Activated naive CD4-positive, alpha-beta T cell treated with anti-CD3 and anti-CD28 coated beads, Interleukin-2, amount 10 ng/mL, durations not matched to agents 7 days and 5 days (primary cell): ENCODE measurements at regions of chr3 and their contacts with region 1.

Region 1: DNA sequence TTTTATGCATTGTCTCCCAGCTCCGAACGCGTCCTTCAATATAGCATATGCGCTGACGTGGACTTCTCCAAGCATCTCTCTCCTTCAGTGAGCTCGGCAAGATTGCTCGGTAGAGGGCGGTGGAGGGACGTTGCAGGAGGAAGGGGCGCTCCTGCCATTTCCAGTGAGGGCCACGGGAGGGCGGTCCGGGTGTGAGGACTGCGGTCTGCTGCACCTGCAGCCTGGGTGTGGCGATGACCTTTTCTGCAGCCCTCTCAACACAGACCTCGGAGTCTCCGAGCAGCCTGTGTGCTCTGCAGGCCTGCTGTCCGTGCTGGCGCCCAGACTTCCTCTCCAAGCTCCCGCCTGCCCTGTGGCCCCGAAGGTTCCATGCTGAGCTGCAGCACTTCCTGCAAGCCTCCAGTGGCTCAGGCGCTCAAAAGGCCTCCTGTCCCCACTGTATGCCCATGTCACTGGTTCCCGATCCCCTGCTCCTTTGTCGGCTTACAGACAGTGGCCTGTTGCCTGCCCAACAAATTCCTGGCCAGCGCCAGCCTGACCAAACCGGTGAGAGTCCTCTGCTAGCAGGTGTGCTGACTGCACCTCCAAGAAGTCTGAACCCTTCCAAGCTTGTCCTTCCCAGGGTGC is 8.9 kb upstream of the RTP3 start:
- DNase-seq: peak; percentile 97
- H3K4me3 Mint-ChIP-seq: peak overlapping the region; percentile 24
- H3K27ac Mint-ChIP-seq: no peak overlapping the region
- H3K4me1 Mint-ChIP-seq: peaks cover 37% of the 10 kb centered on the region
- H3K27me3 Mint-ChIP-seq: peaks cover 9% of the 10 kb centered on the region

Region 2: DNA sequence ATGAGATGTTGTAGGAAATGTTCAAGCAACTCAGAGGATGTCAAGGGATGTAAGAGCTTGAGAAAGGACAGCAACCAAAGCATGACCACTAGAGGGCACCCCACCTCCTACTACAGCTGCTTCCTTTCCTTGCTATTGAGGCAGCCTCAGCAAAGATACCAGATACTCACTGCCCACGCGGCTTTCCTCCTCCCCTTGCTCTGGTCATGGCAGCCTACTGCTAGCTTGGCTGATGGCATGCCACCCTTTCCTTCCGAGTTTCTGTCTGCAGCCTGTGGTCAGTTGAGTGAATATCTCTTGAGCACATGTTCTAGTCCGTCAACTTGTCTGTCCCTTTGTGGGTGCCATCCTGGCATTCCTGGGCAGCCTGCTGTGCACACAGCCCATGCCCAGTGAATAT is 550.0 kb before region 1 on chr3:
- CTCF ChIA-PET with region 1: no interaction called
- DNase-seq: peak; percentile 92
- H3K4me3 Mint-ChIP-seq: no peak overlapping the region
- H3K27ac Mint-ChIP-seq: no peak overlapping the region
- H3K4me1 Mint-ChIP-seq: peaks cover 38% of the 10 kb centered on the region
- H3K27me3 Mint-ChIP-seq: peaks cover 7% of the 10 kb centered on the region

Region 3: GRCh38 chr3:46325645-46326585 is 162.9 kb before region 1 on chr3:
- CTCF ChIA-PET with region 1: no interaction called
- DNase-seq: no peak
- H3K4me3 Mint-ChIP-seq: no peak overlapping the region
- H3K27ac Mint-ChIP-seq: no peak overlapping the region
- H3K4me1 Mint-ChIP-seq: peaks cover 3% of the 10 kb centered on the region
- H3K27me3 Mint-ChIP-seq: peaks cover 29% of the 10 kb centered on the region

Region 4: GRCh38 chr3:46469680-46470357 is 19.0 kb before region 1 on chr3:
- CTCF ChIA-PET with region 1: interaction called, 21 read pairs
- DNase-seq: no peak
- H3K4me3 Mint-ChIP-seq: no peak overlapping the region
- H3K27ac Mint-ChIP-seq: no peak overlapping the region
- H3K4me1 Mint-ChIP-seq: peaks cover 2% of the 10 kb centered on the region
- H3K27me3 Mint-ChIP-seq: peaks cover 87% of the 10 kb centered on the region

Region 5: DNA sequence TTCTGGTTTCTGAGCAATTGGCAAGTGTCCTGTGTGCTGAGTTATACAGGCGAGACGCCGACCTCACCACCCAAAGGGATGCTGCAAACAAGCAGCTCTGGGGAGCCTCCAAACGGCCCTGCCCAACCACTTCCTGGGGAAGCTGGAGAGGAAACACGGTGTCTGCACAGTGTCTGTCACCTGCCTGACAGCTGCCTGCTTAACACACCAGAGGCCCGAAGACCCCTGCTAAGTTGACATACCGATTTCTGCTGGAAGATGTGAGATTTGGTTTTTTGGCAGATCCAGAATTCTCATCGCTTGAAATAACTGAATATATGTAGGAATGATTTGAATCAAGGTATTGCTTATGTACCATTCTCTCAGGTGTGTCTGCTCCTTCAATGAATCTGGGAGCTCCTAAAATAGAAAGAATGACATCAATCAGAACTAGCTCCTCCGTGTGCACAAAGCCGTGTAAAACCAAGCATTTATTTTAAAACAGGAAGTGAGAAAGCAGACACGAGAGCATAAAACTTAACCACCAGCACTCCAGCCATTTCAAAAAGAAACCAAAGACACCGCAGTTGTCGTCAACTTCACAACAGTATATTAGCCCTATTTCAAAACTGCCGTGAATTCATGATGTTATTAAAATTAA is 50.1 kb after region 1 on chr3:
- CTCF ChIA-PET with region 1: interaction called, 68 read pairs
- DNase-seq: peak; percentile 92
- H3K4me3 Mint-ChIP-seq: peak overlapping the region; percentile 54
- H3K27ac Mint-ChIP-seq: peak overlapping the region; percentile 94
- H3K4me1 Mint-ChIP-seq: peaks cover 83% of the 10 kb centered on the region
- H3K27me3 Mint-ChIP-seq: peaks cover 8% of the 10 kb centered on the region

Region 6: GRCh38 chr3:46558184-46559043 is 69.6 kb after region 1 on chr3:
- CTCF ChIA-PET with region 1: interaction called, 133 read pairs
- DNase-seq: peak; percentile 82
- H3K4me3 Mint-ChIP-seq: peak overlapping the region; percentile 63
- H3K27ac Mint-ChIP-seq: peak overlapping the region; percentile 6
- H3K4me1 Mint-ChIP-seq: peaks cover 31% of the 10 kb centered on the region
- H3K27me3 Mint-ChIP-seq: peaks cover 24% of the 10 kb centered on the region

Region 7: GRCh38 chr3:46629551-46630517 is 141.0 kb after region 1 on chr3:
- CTCF ChIA-PET with region 1: interaction called, 187 read pairs
- DNase-seq: peak; percentile 83
- H3K4me3 Mint-ChIP-seq: peak overlapping the region; percentile 44
- H3K27ac Mint-ChIP-seq: peak overlapping the region; percentile 53
- H3K4me1 Mint-ChIP-seq: peaks cover 25% of the 10 kb centered on the region
- H3K27me3 Mint-ChIP-seq: peaks cover 19% of the 10 kb centered on the region

Region 8: DNA sequence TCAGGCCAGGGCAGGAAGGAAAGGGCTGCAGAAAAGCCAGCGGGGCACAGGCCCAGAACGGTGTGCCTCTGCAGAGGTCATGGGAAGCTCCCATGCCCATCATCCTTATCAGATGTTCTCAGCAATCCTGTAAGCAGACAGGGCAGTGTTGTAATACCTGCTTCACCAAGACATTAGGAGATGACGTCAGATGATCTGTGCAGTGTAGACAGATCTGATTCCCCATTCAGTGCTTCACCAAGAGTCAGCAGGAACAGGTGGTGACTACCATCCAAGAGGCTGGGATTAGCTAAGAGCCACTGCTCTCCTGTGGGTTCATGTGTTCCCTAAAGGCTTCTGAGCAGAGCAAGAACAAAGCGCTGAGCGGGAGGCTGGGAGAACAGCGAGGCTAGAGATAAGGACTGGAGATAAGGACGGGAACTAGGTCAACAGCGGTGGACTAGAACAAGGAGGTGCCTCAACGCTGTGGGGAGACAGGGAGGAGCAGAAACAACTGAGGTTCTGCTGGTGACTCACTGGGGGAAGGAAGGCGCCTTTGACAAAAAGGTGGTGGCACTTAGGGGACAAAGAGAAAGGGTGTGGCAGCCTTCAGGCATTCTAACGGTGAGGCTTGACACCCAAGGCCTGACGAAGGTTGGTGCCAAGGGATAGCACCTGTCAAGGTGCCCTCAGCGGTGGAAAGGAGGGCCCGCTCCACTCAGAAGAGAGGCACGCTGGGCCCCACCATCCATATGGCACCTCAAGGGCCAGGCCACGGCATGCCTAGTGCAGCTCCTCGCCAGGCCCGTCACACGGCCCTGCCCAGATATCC is 459.3 kb after region 1 on chr3:
- CTCF ChIA-PET with region 1: no interaction called
- DNase-seq: peak; percentile 74
- H3K4me3 Mint-ChIP-seq: peak overlapping the region; percentile 61
- H3K27ac Mint-ChIP-seq: peak overlapping the region; percentile 92
- H3K4me1 Mint-ChIP-seq: peaks cover 84% of the 10 kb centered on the region
- H3K27me3 Mint-ChIP-seq: no peaks in the 10 kb centered on the region